ENCODE measurements at regions of chr17 and their contacts with region 1.

Region 1: GRCh38 chr17:50129728-50130558 is at the start of gene SAMD14:
- DNase-seq: no peak
- H3K4me3 ChIP-seq: no peak within 1 kb of the TSS
- H3K27ac ChIP-seq: no peak within 1 kb of the TSS
- H3K4me1 ChIP-seq: peaks cover 10% of the 10 kb centered on the region
- H3K27me3 ChIP-seq: no peaks in the 10 kb centered on the region
- CTCF ChIP-seq: no peak
- total RNA-seq, gene SAMD14: 0.12 to 0.33 TPM

Region 2: DNA sequence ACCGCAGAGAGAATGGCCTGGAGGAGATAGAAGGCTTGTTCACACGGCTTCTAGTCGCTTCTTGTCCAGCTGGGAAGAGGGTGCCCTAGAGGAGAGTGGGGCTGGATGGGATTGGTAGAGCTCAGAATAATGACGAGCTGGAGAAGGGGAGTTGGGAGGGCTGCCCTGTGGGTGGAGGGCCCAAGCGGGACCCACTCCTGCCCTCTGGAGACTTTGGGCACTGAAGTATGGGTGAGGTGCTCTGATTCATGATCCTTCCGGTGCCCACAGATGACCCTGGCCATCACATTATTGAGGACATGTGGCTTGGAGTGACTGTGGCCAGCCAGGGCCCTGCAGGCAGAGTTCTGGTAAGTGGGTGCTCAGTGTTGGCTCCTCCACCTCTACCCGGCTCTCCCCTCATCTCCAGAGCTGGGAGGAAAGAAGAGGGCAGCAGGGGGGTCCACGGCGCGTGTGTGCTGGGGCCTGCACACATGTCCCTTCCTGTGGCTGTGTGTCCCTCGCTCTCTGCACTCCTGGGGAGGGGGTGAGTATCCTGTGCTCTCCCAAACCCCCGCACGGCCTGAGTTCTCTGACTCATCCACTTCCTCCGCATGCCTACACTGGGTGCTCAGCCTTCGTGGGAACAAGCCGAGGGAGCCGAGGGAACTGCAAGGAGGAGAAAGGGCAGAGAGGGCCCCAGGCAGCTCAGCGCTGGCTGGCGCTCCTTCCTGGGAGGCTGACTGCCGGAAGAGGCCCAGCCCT is 65.5 kb before region 1 on chr17:
- CTCF ChIA-PET with region 1: no interaction called
- dilution Hi-C with region 1: no loop called
- in situ Hi-C with region 1: no loop called
- intact Hi-C with region 1: no loop called
- DNase-seq: peak; percentile 96
- H3K4me3 ChIP-seq: no peak overlapping the region
- H3K27ac ChIP-seq: peak overlapping the region; percentile 73
- H3K4me1 ChIP-seq: peaks cover 66% of the 10 kb centered on the region
- H3K27me3 ChIP-seq: no peaks in the 10 kb centered on the region
- CTCF ChIP-seq: peak in 1 of 2 donors; percentile 4

Region 3: GRCh38 chr17:50177983-50178834 is 48.3 kb after region 1 on chr17:
- CTCF ChIA-PET with region 1: no interaction called
- dilution Hi-C with region 1: loop called (anchors 5 kb)
- in situ Hi-C with region 1: no loop called
- intact Hi-C with region 1: no loop called
- DNase-seq: peak; percentile 99
- H3K4me3 ChIP-seq: peak overlapping the region in 1 of 3 experiments; percentile 20
- H3K27ac ChIP-seq: peak overlapping the region; percentile 68
- H3K4me1 ChIP-seq: peaks cover 37% of the 10 kb centered on the region
- H3K27me3 ChIP-seq: no peaks in the 10 kb centered on the region
- CTCF ChIP-seq: peak; percentile 27 to 68

Measured in mammary epithelial cell (primary cell).